Esophagus squamous epithelium (tissue), 5 donors: ENCODE measurements at regions of chr19 and their contacts with region 1.

Region 1: GRCh38 chr19:2543463-2544442 is 67.8 kb downstream of the GADD45B start:
- DNase-seq: peak; percentile 63
- H3K4me3 ChIP-seq: peak overlapping the region in 3 of 4 donors; percentile 21 to 54 (median 31)
- H3K27ac ChIP-seq: peak overlapping the region; percentile 84 to 91 (median 90)
- H3K4me1 ChIP-seq: peaks cover 55 to 75% (median 67%) of the 10 kb centered on the region in 3 donors
- H3K27me3 ChIP-seq: no peaks in the 10 kb centered on the region
- CTCF ChIP-seq: peak in 4 of 6 experiments; percentile 11 to 53 (median 34)
- POLR2A ChIP-seq: peak in 2 of 4 donors; percentile 48 to 68

Region 2: GRCh38 chr19:2355168-2356035 is 188.4 kb before region 1 on chr19:
- intact Hi-C with region 1: no loop called
- DNase-seq: no peak
- H3K4me3 ChIP-seq: no peak overlapping the region
- H3K27ac ChIP-seq: no peak overlapping the region
- H3K4me1 ChIP-seq: peaks cover 0 to 6% (median 0%) of the 10 kb centered on the region in 3 donors
- H3K27me3 ChIP-seq: peaks cover 0 to 22% (median 4%) of the 10 kb centered on the region in 4 donors
- CTCF ChIP-seq: no peak
- POLR2A ChIP-seq: no peak

Region 3: GRCh38 chr19:2475702-2476450 is 67.9 kb before region 1 on chr19 and contains the start of gene GADD45B:
- intact Hi-C with region 1: loop called (anchors 5 kb)
- DNase-seq: peak; percentile 88
- H3K4me3 ChIP-seq: peak within 1 kb of the TSS; percentile 64 to 94 (median 88)
- H3K27ac ChIP-seq: peak within 1 kb of the TSS; percentile 90 to 96 (median 91)
- H3K4me1 ChIP-seq: peaks cover 28 to 59% (median 37%) of the 10 kb centered on the region in 3 donors
- H3K27me3 ChIP-seq: no peaks in the 10 kb centered on the region
- CTCF ChIP-seq: peak in 4 of 6 experiments; percentile 6 to 30 (median 18)
- POLR2A ChIP-seq: peak; percentile 70 to 100 (median 100)
- total RNA-seq, gene GADD45B: 21.6 to 40.1 (median 28.7) TPM

Region 4: GRCh38 chr19:2602391-2603181 is 58.8 kb after region 1 on chr19:
- intact Hi-C with region 1: loop called (anchors 10 kb)
- DNase-seq: no peak
- H3K4me3 ChIP-seq: peak overlapping the region in 3 of 4 donors; percentile 28 to 52 (median 31)
- H3K27ac ChIP-seq: peak overlapping the region; percentile 65 to 90 (median 89)
- H3K4me1 ChIP-seq: peaks cover 21 to 59% (median 32%) of the 10 kb centered on the region in 3 donors
- H3K27me3 ChIP-seq: no peaks in the 10 kb centered on the region
- CTCF ChIP-seq: peak in 2 of 6 experiments; percentile 14 to 36
- POLR2A ChIP-seq: no peak

Region 5: DNA sequence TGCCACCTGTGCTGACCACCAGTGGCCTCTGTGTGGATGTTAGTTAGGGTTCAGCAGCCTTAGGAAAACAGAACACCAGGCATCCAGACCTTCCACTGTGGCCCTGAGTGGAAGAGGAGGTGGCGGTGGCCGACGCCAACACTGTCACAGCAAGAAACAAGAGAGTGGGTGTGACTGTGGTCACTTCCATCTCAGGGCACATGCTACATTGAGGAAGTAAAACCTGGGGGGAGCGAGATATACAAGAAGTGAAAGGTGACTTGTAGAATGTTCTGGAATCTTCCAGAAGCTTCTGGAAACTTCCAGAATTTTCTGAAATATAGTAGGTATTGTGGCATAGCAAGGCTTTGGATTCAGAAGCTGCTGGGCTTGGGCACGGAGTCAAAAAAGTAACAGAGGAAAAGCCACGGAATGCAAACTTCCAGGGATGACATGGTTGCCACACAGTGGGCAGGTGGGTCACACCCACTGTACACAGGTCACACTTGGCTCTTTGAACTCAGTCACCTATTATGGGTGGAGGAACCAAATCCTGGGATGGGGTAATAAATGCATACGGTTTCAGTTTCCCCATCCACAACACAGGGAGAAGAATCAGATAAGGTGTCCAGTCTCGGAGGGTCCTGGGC is 134.4 kb after region 1 on chr19:
- intact Hi-C with region 1: no loop called
- DNase-seq: no peak
- H3K4me3 ChIP-seq: no peak overlapping the region
- H3K27ac ChIP-seq: peak overlapping the region in 3 of 4 donors; percentile 76 to 83 (median 78)
- H3K4me1 ChIP-seq: no peaks in the 10 kb centered on the region
- H3K27me3 ChIP-seq: no peaks in the 10 kb centered on the region
- CTCF ChIP-seq: no peak
- POLR2A ChIP-seq: no peak

Region 6: DNA sequence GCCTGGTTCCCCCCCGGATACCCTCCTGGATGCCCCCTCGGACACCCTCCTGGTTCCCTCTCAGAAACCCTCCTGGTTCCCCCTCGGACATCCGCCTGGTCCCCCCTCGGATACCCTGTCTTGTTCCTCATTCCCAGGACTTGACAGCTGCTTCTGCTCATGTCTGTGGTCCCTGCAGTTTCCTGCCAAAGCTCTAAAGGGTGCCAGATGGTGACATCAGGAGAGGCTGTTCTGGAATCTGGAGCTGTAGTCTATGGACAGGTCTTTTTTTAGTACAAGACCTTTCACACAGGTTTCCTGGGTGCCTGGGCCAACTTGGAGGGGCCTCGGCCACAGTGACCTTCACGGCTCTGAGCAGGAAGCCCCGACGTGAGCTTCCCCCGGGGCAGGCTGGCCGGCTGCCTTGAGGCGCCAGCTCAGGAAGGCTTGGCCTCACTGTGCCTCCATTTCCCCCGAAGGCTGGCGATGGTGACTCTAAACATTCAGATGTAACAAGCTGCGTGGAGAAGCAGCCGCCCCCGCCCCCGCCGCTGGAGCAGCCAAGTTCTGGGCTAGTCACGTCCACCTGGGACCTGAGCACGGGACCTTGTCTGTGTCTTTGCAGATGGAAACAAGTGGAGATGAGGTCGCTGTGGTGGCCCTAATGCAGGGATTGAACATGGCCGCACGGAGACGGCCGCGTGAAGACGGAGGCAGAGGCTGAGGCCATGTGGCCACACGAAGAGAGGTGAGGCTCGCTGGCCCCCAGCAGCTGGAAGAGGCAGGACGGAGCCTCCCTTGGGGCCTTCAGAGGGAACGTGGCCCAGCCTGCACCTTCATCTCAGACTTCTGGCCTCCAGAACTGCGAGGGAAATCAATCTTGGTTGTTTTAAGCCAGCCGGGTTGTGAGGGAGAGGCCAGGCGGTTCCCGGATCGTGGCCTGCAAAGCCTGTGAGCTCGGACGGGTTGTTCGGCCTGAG is 226.6 kb after region 1 on chr19:
- intact Hi-C with region 1: no loop called
- DNase-seq: no peak
- H3K4me3 ChIP-seq: no peak overlapping the region
- H3K27ac ChIP-seq: peak overlapping the region; percentile 13 to 77 (median 50)
- H3K4me1 ChIP-seq: peaks cover 0 to 55% (median 16%) of the 10 kb centered on the region in 3 donors
- H3K27me3 ChIP-seq: no peaks in the 10 kb centered on the region
- CTCF ChIP-seq: no peak
- POLR2A ChIP-seq: no peak